ENCODE measurements at regions of chr11 and their contacts with region 1.

Region 1: DNA sequence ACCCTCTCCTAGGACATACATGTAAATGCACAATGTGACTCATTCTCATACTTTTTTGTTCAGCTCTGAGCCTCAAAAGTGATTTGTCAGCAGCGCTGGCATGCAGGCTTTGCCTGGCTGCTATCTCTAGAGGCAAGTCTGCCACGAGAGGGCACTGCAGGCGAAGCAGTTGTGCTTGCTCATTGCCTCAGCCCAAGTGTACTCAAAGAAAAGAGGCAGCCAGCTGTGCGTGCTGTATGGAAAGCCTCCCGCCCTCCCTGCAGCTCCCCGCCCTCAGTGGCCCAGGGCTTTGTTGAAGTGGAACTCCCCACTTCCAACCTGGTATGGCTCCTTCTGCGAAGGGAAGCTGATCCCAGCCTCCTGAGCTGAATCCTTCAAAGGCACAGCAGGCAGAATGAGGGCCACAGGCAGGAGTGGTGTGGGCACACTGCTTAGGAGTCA is 16.3 kb downstream of the SDHAF2 start:
- H3K4me3 ChIP-seq: no peak overlapping the region
- H3K27ac ChIP-seq: no peak overlapping the region
- H3K4me1 ChIP-seq: no peaks in the 10 kb centered on the region
- CTCF ChIP-seq: peak; percentile 77

Region 2: DNA sequence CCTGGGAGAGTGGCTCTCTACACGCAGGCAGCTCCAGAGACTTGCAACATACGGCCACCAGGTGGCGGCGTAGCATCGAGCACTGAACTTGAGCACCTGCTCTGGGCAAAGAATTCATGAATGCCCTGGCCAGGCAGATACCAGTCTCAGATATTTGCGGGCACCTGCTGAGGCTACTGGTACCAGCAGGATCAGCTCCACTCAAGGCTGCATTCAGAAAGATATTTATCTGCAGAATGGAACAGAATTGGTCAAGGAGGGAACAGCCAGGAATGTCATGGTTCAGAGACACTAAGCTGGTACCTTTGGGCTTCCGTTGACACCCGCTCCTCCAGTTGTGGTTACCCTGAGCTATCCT is 615.1 kb before region 1 on chr11:
- CTCF ChIA-PET with region 1: no interaction called
- POLR2A ChIA-PET with region 1: no interaction called
- H3K4me3 ChIP-seq: no peak overlapping the region
- H3K27ac ChIP-seq: no peak overlapping the region
- H3K4me1 ChIP-seq: no peaks in the 10 kb centered on the region
- CTCF ChIP-seq: peak; percentile 73; the same call in 1 of the 2 replicates

Region 3: DNA sequence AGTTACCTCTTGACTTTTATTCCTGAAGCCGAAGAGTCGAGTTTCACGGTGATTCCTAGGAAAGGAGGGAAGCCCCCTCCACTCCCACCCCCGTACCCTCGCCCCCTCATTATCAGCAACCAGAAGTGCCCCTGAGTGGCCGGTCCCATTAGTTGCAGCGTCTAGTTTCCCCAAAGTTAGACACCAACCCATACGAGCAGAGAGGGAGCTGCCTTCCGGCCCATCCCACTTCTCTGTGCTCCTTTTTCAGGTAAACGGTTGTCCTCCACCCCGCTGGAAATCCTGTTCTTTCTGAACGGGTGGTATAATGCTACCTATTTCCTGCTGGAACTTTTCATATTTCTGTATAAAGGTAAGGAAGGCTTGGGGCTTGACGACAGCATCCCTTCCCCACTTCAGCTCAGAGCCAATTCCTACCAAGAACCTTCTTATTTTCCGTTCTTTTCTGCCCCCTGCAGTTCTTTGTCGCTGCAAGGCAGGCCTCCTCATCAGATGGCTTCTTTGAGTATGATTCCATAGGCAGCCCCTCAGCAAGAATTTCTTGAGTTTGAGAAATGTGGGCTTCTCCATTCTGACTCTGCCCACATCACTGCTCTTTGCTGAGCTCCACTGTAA is 53.1 kb before region 1 on chr11:
- CTCF ChIA-PET with region 1: no interaction called
- POLR2A ChIA-PET with region 1: no interaction called
- H3K4me3 ChIP-seq: peak overlapping the region; percentile 70
- H3K27ac ChIP-seq: peak overlapping the region; percentile 65
- H3K4me1 ChIP-seq: no peaks in the 10 kb centered on the region
- CTCF ChIP-seq: 0 out of 2 replicates have a peak, but pooled peaks have one; percentile 12

Region 4: GRCh38 chr11:61460474-61460881 is 14.2 kb after region 1 on chr11:
- CTCF ChIA-PET with region 1: interaction called, 37 read pairs
- POLR2A ChIA-PET with region 1: interaction called, 4 read pairs
- H3K4me3 ChIP-seq: no peak overlapping the region
- H3K27ac ChIP-seq: no peak overlapping the region
- H3K4me1 ChIP-seq: no peaks in the 10 kb centered on the region
- CTCF ChIP-seq: no peak

Region 5: GRCh38 chr11:61477727-61478148 is 31.5 kb after region 1 on chr11:
- CTCF ChIA-PET with region 1: interaction called, 19 read pairs
- POLR2A ChIA-PET with region 1: interaction called, 3 read pairs
- H3K4me3 ChIP-seq: no peak overlapping the region
- H3K27ac ChIP-seq: no peak overlapping the region
- H3K4me1 ChIP-seq: no peaks in the 10 kb centered on the region
- CTCF ChIP-seq: peak; percentile 71

Region 6: GRCh38 chr11:61516675-61517572 is 70.7 kb after region 1 on chr11:
- CTCF ChIA-PET with region 1: interaction called, 118 read pairs
- POLR2A ChIA-PET with region 1: no interaction called
- H3K4me3 ChIP-seq: no peak overlapping the region
- H3K27ac ChIP-seq: no peak overlapping the region
- H3K4me1 ChIP-seq: no peaks in the 10 kb centered on the region
- CTCF ChIP-seq: peak; percentile 80

Region 7: GRCh38 chr11:61541598-61541997 is 95.4 kb after region 1 on chr11:
- CTCF ChIA-PET with region 1: interaction called, 11 read pairs
- POLR2A ChIA-PET with region 1: no interaction called
- H3K4me3 ChIP-seq: no peak overlapping the region
- H3K27ac ChIP-seq: no peak overlapping the region
- H3K4me1 ChIP-seq: no peaks in the 10 kb centered on the region
- CTCF ChIP-seq: no peak

Region 8: GRCh38 chr11:61639816-61640443 is 193.7 kb after region 1 on chr11:
- CTCF ChIA-PET with region 1: interaction called, 47 read pairs
- POLR2A ChIA-PET with region 1: no interaction called
- H3K4me3 ChIP-seq: no peak overlapping the region
- H3K27ac ChIP-seq: no peak overlapping the region
- H3K4me1 ChIP-seq: no peaks in the 10 kb centered on the region
- CTCF ChIP-seq: no peak

Region 9: GRCh38 chr11:62344210-62344609 is 898.0 kb after region 1 on chr11:
- CTCF ChIA-PET with region 1: no interaction called
- POLR2A ChIA-PET with region 1: no interaction called
- H3K4me3 ChIP-seq: no peak overlapping the region
- H3K27ac ChIP-seq: no peak overlapping the region
- H3K4me1 ChIP-seq: peaks cover 6% of the 10 kb centered on the region; the same call in 1 of the 2 replicates
- CTCF ChIP-seq: no peak